WTC11 (cell line): ENCODE measurements at regions of chr9 and their contacts with region 1.

Region 1: GRCh38 chr9:137029058-137029936 is 1.3 kb upstream of the ABCA2 start:
- DNase-seq: peak; percentile 95
- ATAC-seq: peak; percentile 74
- H3K4me3 Mint-ChIP-seq: peak overlapping the region; percentile 58
- H3K27ac Mint-ChIP-seq: no peak overlapping the region; the same call in 1 of the 2 replicates
- H3K4me1 Mint-ChIP-seq: 0 out of 2 replicates have a peak, but pooled peaks cover 2% of the 10 kb centered on the region
- H3K27me3 Mint-ChIP-seq: peaks cover 17% of the 10 kb centered on the region
- CTCF ChIP-seq: peak; percentile 84

Region 2: DNA sequence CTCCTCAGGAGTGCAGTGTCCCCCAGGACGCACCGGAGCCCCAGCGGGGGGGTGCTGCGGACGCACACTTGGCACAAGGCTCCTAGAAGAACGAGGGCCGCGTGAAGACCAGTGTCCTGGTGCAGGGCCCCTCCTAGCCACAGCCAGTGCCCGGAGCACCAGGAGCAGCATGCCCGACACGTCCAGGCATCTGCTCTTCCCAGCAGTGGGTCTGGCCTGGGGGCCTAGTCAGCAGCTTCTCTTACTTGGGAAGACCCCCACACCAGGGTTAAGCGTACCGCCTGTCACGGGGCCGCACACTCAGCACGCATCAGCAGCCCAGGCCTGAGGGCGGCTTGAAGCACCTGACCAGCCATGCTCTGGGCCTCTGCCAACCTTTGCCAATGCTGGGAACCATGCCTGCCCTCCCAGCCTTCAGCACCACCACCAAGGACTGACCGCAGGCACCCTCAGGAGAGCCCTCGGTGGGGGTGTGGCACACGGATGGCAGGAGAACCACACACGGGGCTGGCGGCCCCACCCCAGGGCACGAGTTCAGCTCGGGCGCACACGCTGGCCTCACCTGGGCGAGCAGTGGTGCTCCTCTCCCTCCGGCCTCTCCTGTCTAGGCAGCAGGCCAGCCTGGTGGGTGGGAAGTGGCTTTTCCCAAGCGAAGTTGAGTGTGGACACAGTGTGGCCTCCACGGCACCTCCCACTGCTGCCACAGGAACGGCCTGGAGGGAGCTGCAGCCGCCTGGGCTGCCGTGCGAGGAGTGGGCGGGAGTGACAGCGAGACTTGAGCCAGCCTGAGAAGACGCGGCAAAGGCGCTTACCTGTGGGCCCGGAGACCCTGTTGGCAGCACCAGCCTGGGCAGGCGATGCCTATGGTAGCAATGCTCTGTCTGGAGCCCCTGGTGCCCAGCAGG is 199.1 kb before region 1 on chr9:
- CTCF ChIA-PET with region 1: no interaction called
- POLR2A ChIA-PET with region 1: no interaction called
- DNase-seq: no peak
- ATAC-seq: no peak
- H3K4me3 Mint-ChIP-seq: no peak overlapping the region
- H3K27ac Mint-ChIP-seq: no peak overlapping the region
- H3K4me1 Mint-ChIP-seq: no peaks in the 10 kb centered on the region
- H3K27me3 Mint-ChIP-seq: no peaks in the 10 kb centered on the region
- CTCF ChIP-seq: no peak

Region 3: DNA sequence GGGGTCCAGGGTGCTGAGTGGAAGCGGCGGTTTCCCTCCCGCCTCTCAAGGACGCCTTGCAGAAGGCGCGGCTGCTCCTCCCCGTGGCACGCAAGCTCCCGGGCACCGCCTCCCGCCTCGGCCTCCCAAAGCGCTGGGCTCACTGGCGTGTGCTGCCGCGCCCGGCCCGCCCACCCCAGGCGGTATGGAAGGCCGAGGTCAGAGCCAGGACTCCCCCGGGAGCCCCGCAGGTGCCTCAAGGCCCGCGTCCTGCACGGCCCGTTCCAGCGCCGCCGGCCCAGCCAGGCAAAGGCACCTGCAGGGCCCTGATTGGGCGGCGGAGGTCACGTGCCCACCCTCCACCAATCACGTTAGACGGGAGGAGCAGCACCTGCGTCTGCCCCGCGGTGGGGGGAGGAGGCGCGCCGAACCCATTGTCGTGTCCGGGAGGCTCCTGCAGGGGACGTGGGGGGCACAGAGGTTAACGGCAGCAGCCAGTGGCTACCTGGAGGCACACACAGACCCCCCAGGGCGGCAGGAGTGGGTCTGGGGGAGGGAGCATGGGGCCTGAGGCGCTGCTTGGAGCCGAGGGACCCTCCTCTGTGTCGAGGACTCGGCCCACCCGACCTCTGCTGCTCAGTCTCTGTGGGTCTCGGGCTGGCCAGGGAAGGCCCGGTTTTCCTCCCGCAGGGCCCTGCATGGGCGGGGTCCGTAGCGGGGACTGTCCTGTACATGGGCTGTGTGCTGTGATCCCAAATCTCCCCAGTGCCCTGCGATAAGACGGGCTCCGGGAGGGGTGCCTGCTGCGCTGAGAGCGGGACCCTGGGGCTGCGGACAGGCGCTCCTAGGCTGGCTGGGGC is 79.3 kb before region 1 on chr9:
- CTCF ChIA-PET with region 1: interaction called, 151 read pairs
- POLR2A ChIA-PET with region 1: interaction called, 3 read pairs
- DNase-seq: peak; percentile 97
- ATAC-seq: peak; percentile 81
- H3K4me3 Mint-ChIP-seq: peak overlapping the region; percentile 72
- H3K27ac Mint-ChIP-seq: no peak overlapping the region
- H3K4me1 Mint-ChIP-seq: peaks cover 7% of the 10 kb centered on the region
- H3K27me3 Mint-ChIP-seq: no peaks in the 10 kb centered on the region
- CTCF ChIP-seq: no peak

Region 4: GRCh38 chr9:136985027-136985602 is 44.2 kb before region 1 on chr9:
- CTCF ChIA-PET with region 1: interaction called, 24 read pairs
- POLR2A ChIA-PET with region 1: no interaction called
- DNase-seq: no peak
- ATAC-seq: peak; percentile 41
- H3K4me3 Mint-ChIP-seq: peak overlapping the region; percentile 49
- H3K27ac Mint-ChIP-seq: no peak overlapping the region
- H3K4me1 Mint-ChIP-seq: no peaks in the 10 kb centered on the region
- H3K27me3 Mint-ChIP-seq: peaks cover 38% of the 10 kb centered on the region
- CTCF ChIP-seq: no peak

Region 5: GRCh38 chr9:137012694-137013584 is 16.4 kb before region 1 on chr9:
- CTCF ChIA-PET with region 1: interaction called, 12 read pairs
- POLR2A ChIA-PET with region 1: no interaction called
- DNase-seq: peak; percentile 70
- ATAC-seq: peak; percentile 65
- H3K4me3 Mint-ChIP-seq: no peak overlapping the region
- H3K27ac Mint-ChIP-seq: no peak overlapping the region
- H3K4me1 Mint-ChIP-seq: no peaks in the 10 kb centered on the region
- H3K27me3 Mint-ChIP-seq: no peaks in the 10 kb centered on the region
- CTCF ChIP-seq: no peak

Region 6: DNA sequence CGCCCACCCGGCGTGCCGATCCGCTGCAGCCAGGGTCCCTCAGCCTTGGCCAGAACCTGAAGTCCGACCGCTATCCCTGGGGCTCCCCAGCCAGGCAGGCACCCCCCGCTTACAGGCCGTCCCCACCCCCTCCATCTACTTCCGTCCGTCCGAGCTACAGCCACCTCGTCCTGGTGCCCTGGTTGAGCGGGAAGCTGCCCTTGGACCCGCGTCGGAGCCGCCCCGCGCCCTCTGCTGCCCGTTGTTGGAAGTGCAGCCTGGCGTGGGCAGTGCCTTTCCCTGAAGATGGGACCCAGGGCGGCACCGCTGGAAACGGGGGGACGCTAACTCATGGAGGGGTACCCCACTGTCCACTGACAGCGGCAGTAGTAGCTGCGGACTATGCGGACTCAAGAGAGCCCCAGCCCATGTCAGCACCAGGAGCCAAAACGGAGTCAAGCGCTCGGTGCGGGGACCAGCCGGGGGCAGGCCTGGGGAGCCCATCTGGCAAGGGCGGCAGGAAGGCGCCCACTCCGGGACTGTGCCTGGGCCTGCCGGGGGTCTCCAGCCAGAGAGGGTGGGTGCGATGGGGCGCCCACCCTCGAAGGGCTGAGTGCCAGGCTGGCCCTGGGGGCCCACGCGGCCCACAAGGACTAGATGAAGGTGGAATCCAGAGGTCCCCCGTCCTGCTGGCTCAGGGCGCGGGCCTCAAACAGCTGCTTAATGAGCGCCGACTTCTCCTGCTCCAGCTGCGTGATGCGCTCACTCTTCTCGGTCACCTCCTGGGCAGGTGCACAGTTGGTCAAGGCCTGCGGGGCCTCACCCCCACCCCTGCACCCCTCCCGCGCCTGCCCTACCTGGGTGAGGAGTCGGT is 35.0 kb after region 1 on chr9:
- CTCF ChIA-PET with region 1: interaction called, 91 read pairs
- POLR2A ChIA-PET with region 1: no interaction called
- DNase-seq: peak; percentile 84
- ATAC-seq: peak; percentile 51
- H3K4me3 Mint-ChIP-seq: no peak overlapping the region
- H3K27ac Mint-ChIP-seq: no peak overlapping the region
- H3K4me1 Mint-ChIP-seq: peaks cover 12% of the 10 kb centered on the region
- H3K27me3 Mint-ChIP-seq: peaks cover 6% of the 10 kb centered on the region
- CTCF ChIP-seq: peak; percentile 99

Region 7: GRCh38 chr9:137129456-137130175 is 100.3 kb after region 1 on chr9:
- CTCF ChIA-PET with region 1: interaction called, 17 read pairs
- POLR2A ChIA-PET with region 1: no interaction called
- DNase-seq: peak; percentile 87
- ATAC-seq: peak; percentile 96
- H3K4me3 Mint-ChIP-seq: peak overlapping the region; percentile 78
- H3K27ac Mint-ChIP-seq: no peak overlapping the region
- H3K4me1 Mint-ChIP-seq: peaks cover 14% of the 10 kb centered on the region
- H3K27me3 Mint-ChIP-seq: peaks cover 23% of the 10 kb centered on the region
- CTCF ChIP-seq: no peak

Region 8: GRCh38 chr9:137618105-137619067 is 589.1 kb after region 1 on chr9 and contains the start of gene EHMT1:
- CTCF ChIA-PET with region 1: no interaction called
- POLR2A ChIA-PET with region 1: no interaction called
- DNase-seq: peak; percentile 87
- ATAC-seq: peak; percentile 78
- H3K4me3 Mint-ChIP-seq: peak within 1 kb of the TSS; percentile 93
- H3K27ac Mint-ChIP-seq: peak within 1 kb of the TSS; percentile 89
- H3K4me1 Mint-ChIP-seq: peaks cover 27% of the 10 kb centered on the region
- H3K27me3 Mint-ChIP-seq: no peaks in the 10 kb centered on the region
- CTCF ChIP-seq: no peak
- total RNA-seq, gene EHMT1: 152 to 170 TPM (median 154 TPM) in 3 replicates